GM23248 (cell line): ENCODE measurements at regions of chr14 and their contacts with region 1.

Region 1: GRCh38 chr14:20613094-20614037 is 22.2 kb upstream of the RNASE12 start:
- DNase-seq: peak; percentile 99
- H3K4me3 ChIP-seq: peak overlapping the region; percentile 85
- H3K27ac ChIP-seq: peak overlapping the region; percentile 79
- H3K4me1 ChIP-seq: peaks cover 8% of the 10 kb centered on the region; the same call in 1 of the 2 replicates
- H3K27me3 ChIP-seq: no peaks in the 10 kb centered on the region

Region 2: GRCh38 chr14:20327005-20327869 is 286.1 kb before region 1 on chr14:
- in situ Hi-C with region 1: loop called (anchors 10 kb)
- DNase-seq: peak; percentile 78
- H3K4me3 ChIP-seq: 0 out of 2 replicates have a peak overlapping the region, but pooled peaks have one; percentile 26
- H3K27ac ChIP-seq: peak overlapping the region; percentile 37
- H3K4me1 ChIP-seq: peaks cover 9% of the 10 kb centered on the region; the same call in 1 of the 2 replicates
- H3K27me3 ChIP-seq: no peaks in the 10 kb centered on the region

Region 3: DNA sequence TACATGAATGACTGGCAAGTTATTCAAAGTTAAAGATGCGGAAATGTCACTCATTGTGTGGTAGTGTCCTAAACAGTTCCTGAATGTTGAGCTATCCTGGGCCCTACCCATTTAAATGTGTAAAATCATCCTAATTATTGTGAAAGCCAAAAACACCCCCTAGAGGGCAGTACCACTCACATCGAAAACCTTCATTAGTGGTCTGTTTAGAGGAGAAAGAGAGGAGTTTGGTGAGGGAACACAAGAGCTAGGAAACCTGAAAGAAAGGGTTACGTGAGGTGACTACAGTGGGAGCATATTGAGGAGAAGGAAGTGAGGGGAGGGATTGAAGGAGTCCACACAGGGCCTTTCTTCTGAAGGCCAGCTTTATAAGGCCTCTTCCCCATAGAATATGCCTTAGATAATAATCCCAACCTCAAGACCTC is 197.6 kb before region 1 on chr14:
- in situ Hi-C with region 1: loop called (anchors 5 kb)
- DNase-seq: peak; percentile 72
- H3K4me3 ChIP-seq: no peak overlapping the region
- H3K27ac ChIP-seq: no peak overlapping the region
- H3K4me1 ChIP-seq: peaks cover 8% of the 10 kb centered on the region
- H3K27me3 ChIP-seq: no peaks in the 10 kb centered on the region